Activated naive CD4-positive, alpha-beta T cell treated with anti-CD3 and anti-CD28 coated beads for 36 hours (primary cell): ENCODE measurements at regions of chr5 and their contacts with region 1.

Region 1: DNA sequence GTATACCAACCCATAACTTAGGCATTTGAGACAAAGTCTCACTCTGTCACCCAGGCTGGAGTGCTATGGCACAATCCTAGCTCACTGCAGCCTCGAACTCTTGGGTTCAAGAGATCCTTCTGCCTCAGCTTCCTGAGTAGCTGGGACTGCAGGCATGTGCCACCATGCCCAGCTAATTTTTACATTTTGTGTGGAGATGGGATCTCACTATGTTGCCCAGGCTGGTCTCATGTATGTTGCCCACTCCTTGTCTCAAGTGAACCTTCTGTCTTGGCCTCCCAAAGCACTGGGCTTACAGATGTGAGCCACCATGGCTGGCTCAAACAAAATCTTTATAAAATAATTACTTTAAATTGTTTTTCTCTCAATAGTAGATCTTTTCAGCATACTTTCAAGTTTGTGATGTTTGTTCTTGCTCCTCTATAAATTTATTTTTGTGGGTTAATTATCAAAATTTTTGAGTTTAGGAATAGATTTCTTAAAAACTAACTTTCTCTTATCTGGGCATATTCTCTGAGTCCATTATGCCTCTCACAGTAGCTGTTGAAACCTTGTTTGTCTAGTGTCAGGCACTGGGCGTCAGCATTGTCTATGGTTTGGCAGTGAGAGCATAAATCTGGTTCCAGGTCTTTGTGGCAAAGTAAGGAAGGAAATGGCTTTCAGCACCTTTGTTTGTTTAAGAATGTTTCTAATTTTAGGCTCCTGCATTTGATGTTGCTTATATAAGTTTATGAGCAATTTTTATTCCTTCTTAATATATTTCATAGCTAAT is 38.7 kb downstream of the NLN start:
- DNase-seq: peak; percentile 69
- H3K4me3 Mint-ChIP-seq: no peak overlapping the region
- H3K27ac Mint-ChIP-seq: no peak overlapping the region
- H3K4me1 Mint-ChIP-seq: peaks cover 3% of the 10 kb centered on the region
- H3K27me3 Mint-ChIP-seq: no peaks in the 10 kb centered on the region

Region 2: GRCh38 chr5:65779643-65780042 is 19.0 kb after region 1 on chr5:
- CTCF ChIA-PET with region 1: no interaction called
- intact Hi-C with region 1: no loop called
- DNase-seq: no peak
- H3K4me3 Mint-ChIP-seq: no peak overlapping the region
- H3K27ac Mint-ChIP-seq: no peak overlapping the region
- H3K4me1 Mint-ChIP-seq: peaks cover 26% of the 10 kb centered on the region
- H3K27me3 Mint-ChIP-seq: no peaks in the 10 kb centered on the region

Region 3: GRCh38 chr5:66209350-66209749 is 448.7 kb after region 1 on chr5:
- CTCF ChIA-PET with region 1: no interaction called
- intact Hi-C with region 1: loop called (anchors 5 kb)
- DNase-seq: peak; percentile 44
- H3K4me3 Mint-ChIP-seq: no peak overlapping the region
- H3K27ac Mint-ChIP-seq: no peak overlapping the region
- H3K4me1 Mint-ChIP-seq: no peaks in the 10 kb centered on the region
- H3K27me3 Mint-ChIP-seq: no peaks in the 10 kb centered on the region